Activated CD8-positive, alpha-beta T cell treated with anti-CD3 and anti-CD28 coated beads for 36 hours (primary cell): ENCODE measurements at regions of chr3 and their contacts with region 1.

Region 1: GRCh38 chr3:132034486-132035464 is at the start of gene CPNE4:
- DNase-seq: peak; percentile 78
- ATAC-seq: peak; percentile 98
- H3K4me3 Mint-ChIP-seq: no peak within 1 kb of the TSS
- H3K27ac Mint-ChIP-seq: no peak within 1 kb of the TSS
- H3K4me1 Mint-ChIP-seq: peaks cover 7% of the 10 kb centered on the region
- H3K27me3 Mint-ChIP-seq: peaks cover 70% of the 10 kb centered on the region
- CTCF ChIP-seq: peak; percentile 68
- total RNA-seq, gene CPNE4: not detected

Region 2: GRCh38 chr3:131033480-131034080 is 1001.2 kb before region 1 on chr3:
- CTCF ChIA-PET with region 1: interaction called, 4 read pairs
- POLR2A ChIA-PET with region 1: no interaction called
- intact Hi-C with region 1: loop called (anchors 10 kb)
- DNase-seq: peak; percentile 21
- ATAC-seq: peak; percentile 81
- H3K4me3 Mint-ChIP-seq: no peak overlapping the region
- H3K27ac Mint-ChIP-seq: no peak overlapping the region
- H3K4me1 Mint-ChIP-seq: no peaks in the 10 kb centered on the region
- H3K27me3 Mint-ChIP-seq: no peaks in the 10 kb centered on the region
- CTCF ChIP-seq: peak; percentile 81

Region 3: DNA sequence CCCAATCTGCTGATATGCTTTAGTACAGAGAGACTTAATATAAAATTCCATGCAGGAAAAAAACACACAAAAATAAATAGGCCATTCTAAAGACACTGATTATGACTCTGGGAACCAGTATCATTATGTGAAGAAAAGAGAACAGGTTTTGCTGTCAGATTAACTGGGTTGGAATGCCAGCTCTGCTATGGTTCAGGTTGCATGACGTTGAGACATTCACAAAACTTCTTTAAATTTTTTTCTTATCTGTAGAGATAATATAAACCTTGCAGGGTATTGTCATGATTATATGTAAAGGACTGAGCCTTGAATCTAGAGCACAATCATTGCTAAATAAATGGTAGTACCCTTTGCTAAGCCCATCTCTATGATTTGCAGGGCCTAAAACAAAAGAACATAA is 86.0 kb before region 1 on chr3:
- CTCF ChIA-PET with region 1: no interaction called
- POLR2A ChIA-PET with region 1: no interaction called
- intact Hi-C with region 1: no loop called
- DNase-seq: no peak
- ATAC-seq: no peak
- H3K4me3 Mint-ChIP-seq: no peak overlapping the region
- H3K27ac Mint-ChIP-seq: no peak overlapping the region
- H3K4me1 Mint-ChIP-seq: no peaks in the 10 kb centered on the region
- H3K27me3 Mint-ChIP-seq: peaks cover 1% of the 10 kb centered on the region
- CTCF ChIP-seq: no peak

Region 4: DNA sequence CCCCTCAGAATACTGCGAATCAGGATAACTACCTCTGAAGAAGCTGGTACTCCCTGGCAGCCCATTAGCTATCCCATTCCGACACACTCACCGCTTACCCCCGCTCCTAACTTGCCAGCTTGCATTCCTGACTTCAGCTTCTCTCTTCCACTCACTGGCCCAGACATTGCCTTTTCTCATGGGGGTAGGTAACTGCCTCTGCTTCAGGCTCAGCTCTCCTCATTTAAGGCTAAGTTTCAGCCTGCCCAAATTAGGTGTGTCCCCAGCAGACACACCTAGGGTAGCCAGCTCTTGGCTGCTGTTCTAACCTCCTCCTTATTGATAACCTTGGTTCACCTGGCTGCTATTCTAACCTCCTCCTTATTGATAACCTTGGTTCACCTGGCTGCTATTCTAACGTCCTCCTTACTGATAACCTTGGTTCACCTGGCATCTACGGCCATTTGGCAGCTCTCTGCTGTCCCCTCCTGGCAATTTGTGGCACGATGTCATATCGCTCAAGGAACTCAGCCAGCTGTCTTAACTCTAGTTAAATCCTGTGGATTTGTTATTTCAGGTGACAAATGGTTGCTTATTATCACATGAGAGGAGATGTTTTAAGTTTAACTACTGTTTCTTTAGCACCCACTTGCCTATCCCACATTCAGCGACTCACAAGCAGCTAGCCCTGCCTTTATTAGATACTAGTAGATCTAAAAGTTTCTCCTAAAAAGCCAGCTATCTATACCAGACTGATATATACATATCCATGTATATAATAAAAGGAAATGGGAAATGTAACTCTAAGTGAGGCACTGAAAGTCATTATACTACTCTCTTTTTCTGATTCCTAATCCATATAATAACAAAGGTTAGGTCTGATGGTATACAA is 175.9 kb after region 1 on chr3:
- CTCF ChIA-PET with region 1: interaction called, 17 read pairs
- POLR2A ChIA-PET with region 1: no interaction called
- intact Hi-C with region 1: no loop called
- DNase-seq: peak; percentile 37
- ATAC-seq: peak; percentile 47
- H3K4me3 Mint-ChIP-seq: no peak overlapping the region
- H3K27ac Mint-ChIP-seq: no peak overlapping the region
- H3K4me1 Mint-ChIP-seq: no peaks in the 10 kb centered on the region
- H3K27me3 Mint-ChIP-seq: peaks cover 11% of the 10 kb centered on the region
- CTCF ChIP-seq: peak; percentile 48

Region 5: DNA sequence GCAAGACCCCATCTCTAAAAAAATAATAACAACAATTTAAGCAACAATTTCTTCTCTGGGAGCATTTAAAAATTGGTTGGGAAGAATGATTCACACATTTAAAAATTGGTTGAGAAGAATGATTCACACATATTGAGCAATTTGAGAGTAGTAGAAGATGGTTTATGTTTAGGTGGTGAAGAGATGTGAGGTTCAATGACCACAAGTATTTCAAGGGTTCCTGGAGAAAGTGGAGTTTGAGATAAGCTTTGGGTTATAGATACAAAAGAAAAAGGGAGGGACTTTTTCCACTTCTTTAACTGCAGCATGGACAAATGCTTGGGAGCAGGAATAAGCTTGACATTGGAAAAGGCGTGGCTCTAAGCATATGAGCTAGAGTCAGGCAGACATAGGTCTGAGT is 833.2 kb after region 1 on chr3:
- CTCF ChIA-PET with region 1: no interaction called
- POLR2A ChIA-PET with region 1: no interaction called
- intact Hi-C with region 1: no loop called
- DNase-seq: no peak
- ATAC-seq: no peak
- H3K4me3 Mint-ChIP-seq: no peak overlapping the region
- H3K27ac Mint-ChIP-seq: no peak overlapping the region
- H3K4me1 Mint-ChIP-seq: no peaks in the 10 kb centered on the region
- H3K27me3 Mint-ChIP-seq: no peaks in the 10 kb centered on the region
- CTCF ChIP-seq: no peak